HepG2 (cell line): ENCODE measurements at regions of chr3 and their contacts with region 1.

Region 1: DNA sequence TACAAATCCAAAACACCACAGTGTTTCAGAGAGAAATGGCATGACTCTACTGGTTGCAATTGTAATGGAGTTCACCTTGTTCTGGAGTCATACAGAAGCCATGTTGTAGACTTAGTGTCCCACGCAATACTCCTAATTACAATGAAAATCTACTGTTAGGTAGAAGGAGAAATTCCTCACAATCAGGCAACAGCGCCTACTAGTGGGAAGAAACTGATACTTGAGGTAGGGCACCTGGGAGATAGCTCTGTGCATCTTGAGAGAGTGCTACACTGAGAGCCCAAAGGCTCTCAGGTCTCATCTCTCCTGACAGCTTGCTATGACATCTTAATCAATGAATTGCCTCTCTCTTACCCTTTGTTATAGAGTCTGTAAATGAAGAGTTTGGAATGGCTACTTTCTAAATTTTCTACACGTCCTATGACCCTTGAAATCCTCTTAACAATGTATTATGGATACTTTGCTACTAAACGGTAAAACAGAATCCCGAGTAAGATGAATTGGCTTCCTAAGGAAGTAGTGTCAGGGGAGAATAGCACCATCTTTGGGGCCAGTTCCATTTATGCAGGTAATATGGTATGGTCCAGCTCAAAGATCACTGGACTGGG is 422.7 kb upstream of the TPRG1 start:
- DNase-seq: no peak
- ATAC-seq: no peak
- H3K4me3 ChIP-seq: no peak overlapping the region
- H3K27ac ChIP-seq: peak overlapping the region; percentile 99
- H3K4me1 ChIP-seq: peaks cover 61% of the 10 kb centered on the region
- H3K27me3 ChIP-seq: no peaks in the 10 kb centered on the region
- CTCF ChIP-seq: no peak
- EP300 ChIP-seq: no peak
- POLR2A ChIP-seq: no peak
- RAD21 ChIP-seq: no peak

Region 2: GRCh38 chr3:188294823-188295487 is 454.2 kb before region 1 on chr3:
- CTCF ChIA-PET with region 1: no interaction called
- POLR2A ChIA-PET with region 1: interaction called, 18 read pairs
- in situ Hi-C with region 1: loop called (anchors 5 kb)
- intact Hi-C with region 1: loop called (anchors 5 kb)
- DNase-seq: peak; percentile 99
- ATAC-seq: peak; percentile 90
- H3K4me3 ChIP-seq: peak overlapping the region in 1 of 3 experiments; percentile 45; a peak in 2 of 6 replicates
- H3K27ac ChIP-seq: peak overlapping the region; percentile 94
- H3K4me1 ChIP-seq: peaks cover 99% of the 10 kb centered on the region
- H3K27me3 ChIP-seq: no peaks in the 10 kb centered on the region
- CTCF ChIP-seq: no peak
- EP300 ChIP-seq: peak; percentile 90 to 96; a peak in 3 of 4 replicates
- POLR2A ChIP-seq: peak; percentile 48 to 74; a peak in 3 of 4 replicates
- RAD21 ChIP-seq: peak; percentile 37; the same call in 1 of the 2 replicates

Region 3: GRCh38 chr3:188664795-188665194 is 84.3 kb before region 1 on chr3:
- CTCF ChIA-PET with region 1: no interaction called
- POLR2A ChIA-PET with region 1: no interaction called
- in situ Hi-C with region 1: no loop called
- intact Hi-C with region 1: loop called (anchors 5 kb)
- DNase-seq: peak; percentile 32
- ATAC-seq: peak; percentile 74
- H3K4me3 ChIP-seq: no peak overlapping the region
- H3K27ac ChIP-seq: no peak overlapping the region
- H3K4me1 ChIP-seq: peaks cover 35% of the 10 kb centered on the region
- H3K27me3 ChIP-seq: no peaks in the 10 kb centered on the region
- CTCF ChIP-seq: peak; percentile 53
- EP300 ChIP-seq: no peak
- POLR2A ChIP-seq: no peak
- RAD21 ChIP-seq: no peak

Region 4: GRCh38 chr3:188720636-188721035 is 28.5 kb before region 1 on chr3:
- CTCF ChIA-PET with region 1: no interaction called
- POLR2A ChIA-PET with region 1: interaction called, 16 read pairs
- in situ Hi-C with region 1: no loop called
- intact Hi-C with region 1: loop called (anchors 1 kb)
- DNase-seq: peak; percentile 95
- ATAC-seq: peak; percentile 99
- H3K4me3 ChIP-seq: no peak overlapping the region
- H3K27ac ChIP-seq: peak overlapping the region; percentile 78
- H3K4me1 ChIP-seq: peaks cover 47% of the 10 kb centered on the region
- H3K27me3 ChIP-seq: no peaks in the 10 kb centered on the region
- CTCF ChIP-seq: no peak
- EP300 ChIP-seq: peak; percentile 74 to 99; a peak in 3 of 4 replicates
- POLR2A ChIP-seq: no peak
- RAD21 ChIP-seq: no peak

Region 5: DNA sequence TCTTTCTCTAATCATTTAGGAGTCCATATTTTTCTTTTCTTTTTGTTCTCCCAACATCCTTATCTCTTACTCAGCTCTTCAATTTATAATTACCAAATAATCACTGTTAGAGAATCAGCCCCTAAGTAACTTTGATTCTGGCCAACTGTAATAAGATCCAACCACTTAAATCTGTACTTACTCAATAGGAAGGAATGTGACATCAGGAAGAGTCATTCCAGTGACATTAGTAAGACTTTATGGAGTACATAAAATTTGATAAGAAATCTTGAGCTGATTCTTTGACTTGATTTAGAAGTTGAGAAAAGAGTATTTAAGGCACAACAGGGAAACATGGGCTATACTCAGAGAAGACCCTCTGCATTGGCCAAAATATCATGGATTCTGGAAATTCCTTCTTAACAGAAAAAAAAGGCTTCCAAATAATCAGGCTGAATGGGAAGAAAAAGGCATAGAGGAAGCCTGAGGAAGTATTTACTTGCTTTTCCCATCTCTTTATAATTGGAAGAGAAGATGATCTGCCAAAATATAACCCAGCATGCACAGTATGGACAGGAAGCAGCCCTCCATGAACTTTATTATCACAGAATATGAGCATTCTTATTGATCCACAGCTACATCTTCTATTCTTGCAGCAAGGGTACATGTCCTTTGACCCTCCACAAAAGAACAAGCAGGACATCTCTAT is 133.0 kb after region 1 on chr3:
- CTCF ChIA-PET with region 1: no interaction called
- POLR2A ChIA-PET with region 1: interaction called, 10 read pairs
- in situ Hi-C with region 1: no loop called
- intact Hi-C with region 1: no loop called
- DNase-seq: peak; percentile 24
- ATAC-seq: no peak
- H3K4me3 ChIP-seq: no peak overlapping the region
- H3K27ac ChIP-seq: peak overlapping the region; percentile 62
- H3K4me1 ChIP-seq: peaks cover 26% of the 10 kb centered on the region
- H3K27me3 ChIP-seq: no peaks in the 10 kb centered on the region
- CTCF ChIP-seq: no peak
- EP300 ChIP-seq: no peak
- POLR2A ChIP-seq: no peak
- RAD21 ChIP-seq: no peak